ENCODE measurements at regions of chr15 and their contacts with region 1.

Region 1: GRCh38 chr15:38252481-38253412 is at the start of gene SPRED1:
- DNase-seq: peak; percentile 56
- H3K4me3 Mint-ChIP-seq: peak within 1 kb of the TSS; percentile 83
- H3K27ac Mint-ChIP-seq: peak within 1 kb of the TSS; percentile 90
- H3K4me1 Mint-ChIP-seq: peaks cover 19% of the 10 kb centered on the region
- H3K27me3 Mint-ChIP-seq: no peaks in the 10 kb centered on the region
- CTCF ChIP-seq: no peak
- total RNA-seq, gene SPRED1: 26.4 and 28.1 TPM in 2 replicates

Region 2: GRCh38 chr15:38072348-38073177 is 180.2 kb before region 1 on chr15:
- CTCF ChIA-PET with region 1: interaction called, 6 read pairs
- POLR2A ChIA-PET with region 1: interaction called, 54 read pairs
- intact Hi-C with region 1: loop called (anchors 1 kb)
- DNase-seq: peak; percentile 82
- H3K4me3 Mint-ChIP-seq: peak overlapping the region; percentile 77
- H3K27ac Mint-ChIP-seq: peak overlapping the region; percentile 88
- H3K4me1 Mint-ChIP-seq: peaks cover 18% of the 10 kb centered on the region
- H3K27me3 Mint-ChIP-seq: no peaks in the 10 kb centered on the region
- CTCF ChIP-seq: peak; percentile 21

Region 3: GRCh38 chr15:38217191-38217595 is 35.6 kb before region 1 on chr15:
- CTCF ChIA-PET with region 1: interaction called, 4 read pairs
- POLR2A ChIA-PET with region 1: interaction called, 116 read pairs
- intact Hi-C with region 1: no loop called
- DNase-seq: peak; percentile 58
- H3K4me3 Mint-ChIP-seq: peak overlapping the region; percentile 39
- H3K27ac Mint-ChIP-seq: peak overlapping the region; percentile 63
- H3K4me1 Mint-ChIP-seq: peaks cover 25% of the 10 kb centered on the region
- H3K27me3 Mint-ChIP-seq: no peaks in the 10 kb centered on the region
- CTCF ChIP-seq: no peak

Region 4: GRCh38 chr15:38275959-38276358 is 23.2 kb after region 1 on chr15:
- CTCF ChIA-PET with region 1: interaction called, 4 read pairs
- POLR2A ChIA-PET with region 1: interaction called, 188 read pairs
- intact Hi-C with region 1: no loop called
- DNase-seq: peak; percentile 46
- H3K4me3 Mint-ChIP-seq: no peak overlapping the region
- H3K27ac Mint-ChIP-seq: no peak overlapping the region
- H3K4me1 Mint-ChIP-seq: peaks cover 15% of the 10 kb centered on the region
- H3K27me3 Mint-ChIP-seq: no peaks in the 10 kb centered on the region
- CTCF ChIP-seq: no peak

Region 5: DNA sequence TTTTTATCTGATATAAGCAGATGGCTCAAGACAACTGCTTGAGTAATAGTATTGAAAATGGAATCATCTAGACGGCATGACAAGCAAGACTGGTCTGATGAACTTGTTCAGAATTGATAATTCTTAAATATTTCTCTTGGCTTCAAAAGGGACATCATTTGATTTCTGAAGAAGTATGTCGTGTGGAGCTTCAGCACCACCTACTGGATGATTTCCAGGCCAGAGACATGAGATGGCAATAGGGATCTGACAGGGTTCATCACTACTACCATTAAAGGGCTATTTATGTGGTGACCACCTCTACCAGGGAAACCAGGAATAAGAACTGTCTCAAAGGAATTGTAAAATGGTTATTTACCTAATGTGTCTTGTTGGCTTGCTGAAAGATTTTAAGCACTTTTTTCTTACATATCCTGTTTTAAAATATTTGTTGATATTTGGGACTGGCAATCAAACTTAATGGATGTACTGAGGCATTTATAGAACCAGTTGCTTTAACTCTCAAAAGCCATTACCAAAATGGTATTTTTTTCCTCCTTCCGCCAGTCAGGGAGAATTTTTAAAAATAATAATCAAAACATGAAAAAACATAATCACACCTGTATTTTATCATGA is 101.7 kb after region 1 on chr15:
- CTCF ChIA-PET with region 1: interaction called, 5 read pairs
- POLR2A ChIA-PET with region 1: interaction called, 9 read pairs
- intact Hi-C with region 1: loop called (anchors 1 kb)
- DNase-seq: peak; percentile 78
- H3K4me3 Mint-ChIP-seq: no peak overlapping the region
- H3K27ac Mint-ChIP-seq: no peak overlapping the region
- H3K4me1 Mint-ChIP-seq: no peaks in the 10 kb centered on the region
- H3K27me3 Mint-ChIP-seq: no peaks in the 10 kb centered on the region
- CTCF ChIP-seq: peak; percentile 63

Region 6: GRCh38 chr15:38441130-38441519 is 188.4 kb after region 1 on chr15:
- CTCF ChIA-PET with region 1: no interaction called
- POLR2A ChIA-PET with region 1: no interaction called
- intact Hi-C with region 1: no loop called
- DNase-seq: no peak
- H3K4me3 Mint-ChIP-seq: no peak overlapping the region
- H3K27ac Mint-ChIP-seq: no peak overlapping the region
- H3K4me1 Mint-ChIP-seq: peaks cover 6% of the 10 kb centered on the region
- H3K27me3 Mint-ChIP-seq: peaks cover 41% of the 10 kb centered on the region
- CTCF ChIP-seq: no peak

Region 7: DNA sequence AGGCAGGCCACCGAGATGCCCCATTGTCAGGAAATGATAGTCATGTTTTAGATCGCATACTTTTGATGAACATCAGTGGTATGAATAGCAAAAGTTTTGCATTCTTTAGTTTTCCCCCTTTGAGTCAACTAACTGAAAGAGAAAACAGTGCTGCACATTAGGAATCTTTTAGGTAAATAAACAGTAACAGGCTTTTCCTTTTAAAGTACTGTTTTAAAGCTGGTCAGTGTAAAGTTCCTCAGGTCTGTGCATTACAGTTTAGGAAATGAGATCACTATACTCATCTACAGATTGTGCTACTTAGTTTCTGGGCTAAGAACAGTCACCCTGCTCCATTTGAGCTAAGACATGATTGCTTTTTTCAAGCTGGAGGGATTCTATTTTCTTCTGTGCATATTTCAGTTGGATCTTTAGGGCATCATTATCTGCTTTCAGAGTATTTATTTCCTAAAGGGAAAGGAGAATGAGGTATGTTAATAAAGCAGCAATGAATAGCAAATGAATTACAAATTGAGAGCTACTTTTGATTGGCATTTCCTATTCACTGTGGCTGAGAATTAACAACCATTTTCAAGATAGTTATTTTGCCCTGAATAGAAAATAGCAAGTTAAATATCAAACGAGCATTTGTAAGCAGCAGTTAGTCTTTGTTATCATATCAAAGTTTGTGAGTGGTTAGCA is 237.6 kb after region 1 on chr15:
- CTCF ChIA-PET with region 1: no interaction called
- POLR2A ChIA-PET with region 1: no interaction called
- intact Hi-C with region 1: no loop called
- DNase-seq: no peak
- H3K4me3 Mint-ChIP-seq: no peak overlapping the region
- H3K27ac Mint-ChIP-seq: no peak overlapping the region
- H3K4me1 Mint-ChIP-seq: no peaks in the 10 kb centered on the region
- H3K27me3 Mint-ChIP-seq: no peaks in the 10 kb centered on the region
- CTCF ChIP-seq: no peak